ENCODE measurements at regions of chr1 and their contacts with region 1.

Region 1: GRCh38 chr1:231757101-231757404 is 130.5 kb downstream of the DISC1 start:
- DNase-seq: no peak
- H3K4me3 ChIP-seq: peak overlapping the region in 3 of 7 experiments; percentile 19 to 58 (median 48)
- H3K27ac ChIP-seq: no peak overlapping the region
- H3K4me1 ChIP-seq: peaks cover 0 to 5% (median under 1%) of the 10 kb centered on the region in 4 experiments
- H3K27me3 ChIP-seq: no peaks in the 10 kb centered on the region

Region 2: DNA sequence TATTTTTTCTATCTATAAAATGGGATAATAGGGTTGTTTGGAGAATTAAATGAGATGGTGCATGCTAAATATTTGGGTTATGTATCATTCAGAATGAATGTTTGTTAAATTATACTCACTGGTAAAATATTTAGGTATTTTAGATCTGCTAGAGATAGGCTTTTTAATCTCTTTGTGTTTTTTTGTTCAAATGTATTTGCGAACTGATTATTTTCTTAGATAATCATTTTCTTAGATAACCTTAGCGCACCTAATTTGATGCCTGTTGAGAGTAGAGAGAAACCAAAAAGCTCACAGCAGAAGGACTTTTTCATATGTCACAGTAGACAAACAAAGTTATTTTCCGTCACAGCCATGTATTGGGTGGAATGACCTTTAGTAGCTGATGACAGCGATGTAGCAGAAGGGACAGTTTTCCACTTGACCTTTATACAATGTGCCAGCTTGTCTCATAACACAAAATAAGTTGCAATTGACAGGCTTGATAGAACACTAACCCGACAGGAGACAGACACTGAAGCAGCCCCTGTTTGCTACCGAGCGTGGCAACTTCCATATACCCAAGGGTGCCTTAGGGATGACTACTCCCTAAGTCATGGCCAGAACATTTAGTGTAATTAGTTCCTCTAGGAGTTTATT is 37.4 kb before region 1 on chr1:
- CTCF ChIA-PET with region 1: no interaction called
- POLR2A ChIA-PET with region 1: no interaction called
- DNase-seq: no peak
- H3K4me3 ChIP-seq: no peak overlapping the region
- H3K27ac ChIP-seq: no peak overlapping the region
- H3K4me1 ChIP-seq: no peaks in the 10 kb centered on the region
- H3K27me3 ChIP-seq: no peaks in the 10 kb centered on the region

Region 3: GRCh38 chr1:231767471-231767870 is 10.4 kb after region 1 on chr1:
- CTCF ChIA-PET with region 1: interaction called, 19 read pairs
- POLR2A ChIA-PET with region 1: no interaction called
- DNase-seq: no peak
- H3K4me3 ChIP-seq: no peak overlapping the region
- H3K27ac ChIP-seq: no peak overlapping the region
- H3K4me1 ChIP-seq: no peaks in the 10 kb centered on the region
- H3K27me3 ChIP-seq: no peaks in the 10 kb centered on the region

Region 4: GRCh38 chr1:231806623-231807495 is 49.8 kb after region 1 on chr1:
- CTCF ChIA-PET with region 1: interaction called, 36 read pairs
- POLR2A ChIA-PET with region 1: no interaction called
- DNase-seq: peak; percentile 31 to 62 (median 60)
- H3K4me3 ChIP-seq: no peak overlapping the region
- H3K27ac ChIP-seq: no peak overlapping the region
- H3K4me1 ChIP-seq: peaks cover 0 to 17% (median 5%) of the 10 kb centered on the region in 4 experiments
- H3K27me3 ChIP-seq: no peaks in the 10 kb centered on the region